ENCODE measurements at regions of chr4 and their contacts with region 1.

Region 1: DNA sequence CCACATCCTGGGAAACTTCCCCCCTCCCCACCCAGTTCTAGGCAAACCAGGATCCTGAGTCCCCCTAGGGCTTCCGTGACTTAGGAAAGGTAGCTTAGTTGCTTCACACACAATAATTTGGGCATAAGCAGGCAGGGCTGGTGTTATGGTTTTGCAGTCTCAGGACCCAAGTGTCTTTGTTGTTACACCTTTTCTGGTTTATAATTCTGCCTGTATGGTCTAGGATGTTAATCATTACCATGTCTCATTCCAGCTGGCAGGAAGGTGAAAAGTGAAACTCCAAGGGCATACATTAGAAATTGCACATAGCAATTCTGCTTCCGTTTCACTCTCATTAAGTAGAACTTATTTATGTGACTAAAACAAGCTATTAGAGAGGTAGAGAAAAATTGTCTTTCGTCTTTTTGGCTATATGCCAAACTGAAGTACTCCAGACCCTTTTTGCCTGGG is 16.9 kb downstream of the UGT8 start:
- DNase-seq: no peak
- ATAC-seq: no peak
- H3K4me3 Mint-ChIP-seq: no peak overlapping the region
- H3K27ac Mint-ChIP-seq: no peak overlapping the region
- H3K4me1 Mint-ChIP-seq: peaks cover 29% of the 10 kb centered on the region
- H3K27me3 Mint-ChIP-seq: no peaks in the 10 kb centered on the region
- CTCF ChIP-seq: no peak

Region 2: GRCh38 chr4:114603497-114603896 is 12.0 kb before region 1 on chr4:
- CTCF ChIA-PET with region 1: no interaction called
- POLR2A ChIA-PET with region 1: interaction called, 10 read pairs
- intact Hi-C with region 1: loop called (anchors 1 kb)
- DNase-seq: peak; percentile 37
- ATAC-seq: peak; percentile 71
- H3K4me3 Mint-ChIP-seq: no peak overlapping the region
- H3K27ac Mint-ChIP-seq: no peak overlapping the region
- H3K4me1 Mint-ChIP-seq: peaks cover 21% of the 10 kb centered on the region
- H3K27me3 Mint-ChIP-seq: no peaks in the 10 kb centered on the region
- CTCF ChIP-seq: no peak

Region 3: GRCh38 chr4:115467181-115467741 is 851.8 kb after region 1 on chr4:
- CTCF ChIA-PET with region 1: no interaction called
- POLR2A ChIA-PET with region 1: no interaction called
- intact Hi-C with region 1: no loop called
- DNase-seq: no peak
- ATAC-seq: no peak
- H3K4me3 Mint-ChIP-seq: no peak overlapping the region
- H3K27ac Mint-ChIP-seq: no peak overlapping the region
- H3K4me1 Mint-ChIP-seq: no peaks in the 10 kb centered on the region
- H3K27me3 Mint-ChIP-seq: no peaks in the 10 kb centered on the region
- CTCF ChIP-seq: no peak